Sigmoid colon (tissue), 7 donors: ENCODE measurements at regions of chr1 and their contacts with region 1.

Region 1: GRCh38 chr1:225923692-225924555 is at the start of gene PYCR2:
- DNase-seq: peak; percentile 98
- H3K4me3 ChIP-seq: peak within 1 kb of the TSS; percentile 72 to 96 (median 79)
- H3K27ac ChIP-seq: peak within 1 kb of the TSS; percentile 90 to 96 (median 93)
- H3K4me1 ChIP-seq: peaks cover 0 to 37% (median 34%) of the 10 kb centered on the region in 4 donors
- H3K27me3 ChIP-seq: no peaks in the 10 kb centered on the region
- CTCF ChIP-seq: no peak
- EP300 ChIP-seq: no peak
- POLR2A ChIP-seq: peak; percentile 73
- total RNA-seq, gene PYCR2: 31.0 to 40.5 (median 34.0) TPM

Region 2: GRCh38 chr1:225428068-225428880 is 495.6 kb before region 1 on chr1:
- intact Hi-C with region 1: loop called (anchors 5 kb)
- DNase-seq: peak; percentile 97
- H3K4me3 ChIP-seq: peak overlapping the region; percentile 89 to 100 (median 94)
- H3K27ac ChIP-seq: peak overlapping the region; percentile 95 to 100 (median 98)
- H3K4me1 ChIP-seq: peaks cover 0 to 40% (median 32%) of the 10 kb centered on the region in 4 donors
- H3K27me3 ChIP-seq: no peaks in the 10 kb centered on the region
- CTCF ChIP-seq: no peak
- EP300 ChIP-seq: peak in 1 of 4 donors; percentile 2
- POLR2A ChIP-seq: peak; percentile 83 to 86

Region 3: DNA sequence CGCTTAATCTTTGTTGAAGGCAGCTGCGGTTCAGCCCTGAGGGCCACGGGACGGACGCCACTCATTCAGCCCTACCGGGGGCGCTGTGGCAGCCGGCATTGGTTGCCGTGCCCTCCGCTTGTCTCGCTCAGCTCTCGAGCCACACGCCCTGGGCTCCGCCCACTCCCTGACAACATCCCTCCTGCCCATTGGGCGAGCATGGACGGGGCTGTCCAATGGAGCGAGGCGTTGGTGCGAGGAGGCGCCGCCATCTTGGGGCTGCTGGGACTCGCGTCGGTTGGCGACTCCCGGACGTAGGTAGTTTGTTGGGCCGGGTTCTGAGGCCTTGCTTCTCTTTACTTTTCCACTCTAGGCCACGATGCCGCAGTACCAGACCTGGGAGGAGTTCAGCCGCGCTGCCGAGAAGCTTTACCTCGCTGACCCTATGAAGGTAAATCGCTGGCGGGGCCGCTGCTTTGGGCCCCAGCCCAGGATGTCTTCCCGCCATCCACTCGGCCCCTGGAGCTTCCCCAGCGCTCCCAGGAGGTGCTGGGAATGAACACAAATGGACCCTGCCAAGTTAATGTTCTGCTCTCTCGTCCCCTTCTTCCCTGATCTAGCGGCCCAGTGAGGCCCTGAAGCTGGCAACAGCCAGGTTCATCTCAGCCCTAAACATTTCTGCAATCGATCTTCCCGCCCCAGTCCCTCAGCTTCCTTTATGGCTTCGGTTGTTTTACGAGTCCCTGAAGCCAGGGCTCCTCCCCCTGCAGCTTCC is 146.2 kb before region 1 on chr1 and contains the start of gene SRP9:
- intact Hi-C with region 1: loop called (anchors 5 kb)
- DNase-seq: peak; percentile 99
- H3K4me3 ChIP-seq: peak within 1 kb of the TSS; percentile 63 to 84 (median 74)
- H3K27ac ChIP-seq: peak within 1 kb of the TSS; percentile 92 to 96 (median 94)
- H3K4me1 ChIP-seq: peaks cover 0 to 82% (median 79%) of the 10 kb centered on the region in 4 donors
- H3K27me3 ChIP-seq: no peaks in the 10 kb centered on the region
- CTCF ChIP-seq: peak; percentile 77 to 93 (median 83)
- EP300 ChIP-seq: no peak
- POLR2A ChIP-seq: peak; percentile 88 to 93
- total RNA-seq, gene SRP9: 148 to 270 (median 220) TPM

Region 4: GRCh38 chr1:225871359-225872074 is 52.4 kb before region 1 on chr1:
- intact Hi-C with region 1: no loop called
- DNase-seq: no peak
- H3K4me3 ChIP-seq: no peak overlapping the region
- H3K27ac ChIP-seq: no peak overlapping the region
- H3K4me1 ChIP-seq: no peaks in the 10 kb centered on the region
- H3K27me3 ChIP-seq: no peaks in the 10 kb centered on the region
- CTCF ChIP-seq: no peak
- EP300 ChIP-seq: no peak
- POLR2A ChIP-seq: no peak

Region 5: DNA sequence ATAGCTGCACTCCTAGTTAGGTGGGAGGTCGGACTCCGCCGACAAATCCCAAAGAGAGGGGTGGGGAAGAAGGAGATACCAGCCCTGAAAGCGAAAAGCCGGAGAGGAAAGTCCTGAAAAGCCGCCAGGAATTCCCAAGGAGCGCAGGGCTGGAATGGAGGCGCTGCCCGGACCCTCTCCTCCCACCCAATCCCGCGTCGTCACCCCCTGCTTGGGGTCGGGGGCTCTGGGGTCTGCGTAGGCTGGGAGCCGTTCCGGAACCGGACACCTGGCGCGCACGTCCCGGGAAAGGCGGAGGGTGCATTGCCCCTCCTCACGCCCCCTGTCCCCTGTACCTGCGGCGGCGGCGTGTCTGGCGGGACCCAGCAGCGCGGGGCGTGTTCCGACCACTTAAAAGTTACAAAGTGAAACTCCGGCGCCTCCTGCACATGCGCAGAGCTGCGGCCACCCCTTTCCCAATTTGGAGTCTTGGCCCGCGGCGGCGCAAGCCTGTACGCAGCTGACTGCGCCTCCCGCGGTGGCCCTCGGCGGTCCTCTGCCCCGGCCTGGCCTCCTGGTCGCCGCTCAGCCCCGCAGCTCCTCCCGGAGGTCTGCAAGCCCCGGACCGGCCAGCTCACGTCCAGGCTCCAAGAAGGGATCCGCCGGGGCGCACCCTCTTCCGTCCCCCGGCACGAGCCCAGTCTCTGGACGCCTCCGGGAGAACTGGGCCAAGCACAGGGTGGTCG is 41.8 kb before region 1 on chr1 and contains the start of gene TMEM63A:
- intact Hi-C with region 1: loop called (anchors 2 kb)
- DNase-seq: peak; percentile 98
- H3K4me3 ChIP-seq: peak within 1 kb of the TSS; percentile 91 to 98 (median 94)
- H3K27ac ChIP-seq: peak within 1 kb of the TSS; percentile 88 to 91 (median 90)
- H3K4me1 ChIP-seq: peaks cover 0 to 54% (median 49%) of the 10 kb centered on the region in 4 donors
- H3K27me3 ChIP-seq: no peaks in the 10 kb centered on the region
- CTCF ChIP-seq: peak in 1 of 4 experiments; percentile 49
- EP300 ChIP-seq: no peak
- POLR2A ChIP-seq: peak; percentile 66 to 84
- total RNA-seq, gene TMEM63A: 25.3 to 94.4 (median 36.9) TPM

Region 6: DNA sequence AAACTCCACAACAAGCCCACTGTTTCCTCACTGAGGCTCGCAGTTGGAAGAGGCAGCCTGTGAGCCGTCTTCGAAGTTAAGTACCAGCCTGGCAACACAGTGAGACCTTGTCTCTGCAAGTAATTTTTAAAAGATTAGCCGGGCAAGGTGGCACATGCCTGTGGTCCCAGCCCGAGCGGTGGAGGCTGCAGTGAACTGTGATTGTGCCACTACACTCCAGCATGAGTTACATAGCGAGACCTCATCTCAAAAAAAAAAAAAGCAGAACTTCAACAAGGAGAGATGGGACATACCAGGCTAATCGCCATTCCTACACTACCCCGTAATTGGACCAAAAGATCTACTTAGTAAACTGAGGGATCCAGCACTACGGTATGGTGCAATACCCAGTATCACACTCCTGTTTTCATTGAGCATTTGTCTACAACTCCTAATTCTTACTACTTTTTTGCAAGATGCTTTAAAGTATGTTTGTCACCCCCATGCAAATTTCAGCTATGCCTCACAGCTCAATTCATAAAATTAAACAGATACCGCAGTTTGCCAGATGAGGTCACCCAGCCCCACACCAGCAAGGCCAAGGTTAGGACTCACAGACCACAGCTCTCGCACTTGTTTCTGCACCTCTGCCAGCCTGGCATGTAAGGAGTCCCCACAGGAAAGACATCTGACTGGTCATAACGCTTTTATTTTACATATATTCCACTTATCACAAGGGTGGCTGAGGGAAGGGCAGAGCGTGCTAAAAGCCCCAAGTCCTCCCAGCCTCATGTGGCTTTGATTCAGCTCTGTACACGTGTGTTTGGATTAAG is 54.2 kb after region 1 on chr1:
- intact Hi-C with region 1: loop called (anchors 5 kb)
- DNase-seq: peak; percentile 37
- H3K4me3 ChIP-seq: no peak overlapping the region
- H3K27ac ChIP-seq: no peak overlapping the region
- H3K4me1 ChIP-seq: peaks cover 0 to 7% (median 4%) of the 10 kb centered on the region in 4 donors
- H3K27me3 ChIP-seq: no peaks in the 10 kb centered on the region
- CTCF ChIP-seq: no peak
- EP300 ChIP-seq: no peak
- POLR2A ChIP-seq: no peak

Region 7: DNA sequence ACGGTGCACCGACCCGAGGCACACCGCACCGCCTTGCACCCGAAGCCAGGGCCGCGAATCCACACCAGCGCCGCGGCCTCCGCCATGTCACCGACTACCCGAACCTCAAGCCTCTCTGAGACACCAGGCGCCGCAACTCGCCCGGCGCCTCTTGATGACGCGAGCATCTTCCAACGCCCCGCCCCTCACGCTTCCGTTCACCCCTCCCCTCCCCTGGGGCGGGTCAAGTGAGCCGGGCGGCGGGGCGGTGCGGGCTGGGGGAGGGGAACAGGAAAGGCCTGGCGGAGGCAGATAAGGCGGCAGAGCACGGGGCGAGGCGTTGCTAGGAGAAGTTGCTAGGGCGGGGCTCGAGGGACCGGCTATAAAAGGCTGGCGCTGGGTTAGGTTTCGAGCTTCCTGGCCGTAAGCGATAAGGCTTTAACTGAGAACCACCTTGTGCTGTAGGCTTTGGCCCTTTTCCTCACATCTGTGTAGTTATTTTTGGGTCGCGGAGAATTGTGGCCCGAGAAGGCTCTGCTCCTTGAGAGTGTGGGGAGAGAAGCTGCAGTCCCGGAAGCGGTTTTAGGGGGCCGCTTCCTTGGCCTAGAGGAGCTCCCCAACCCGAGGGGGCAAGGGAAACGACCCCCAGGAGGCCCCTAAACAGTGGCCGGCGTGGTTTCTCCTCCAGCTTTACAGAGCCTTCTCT is 75.4 kb after region 1 on chr1 and contains the start of gene SDE2:
- intact Hi-C with region 1: loop called (anchors 2 kb)
- DNase-seq: peak; percentile 100
- H3K4me3 ChIP-seq: peak within 1 kb of the TSS; percentile 56 to 90 (median 81)
- H3K27ac ChIP-seq: peak within 1 kb of the TSS; percentile 95 to 98 (median 97)
- H3K4me1 ChIP-seq: peaks cover 0 to 36% (median 26%) of the 10 kb centered on the region in 4 donors
- H3K27me3 ChIP-seq: no peaks in the 10 kb centered on the region
- CTCF ChIP-seq: peak in 1 of 4 experiments; percentile 20
- EP300 ChIP-seq: peak in 2 of 4 donors; percentile 68 to 84
- POLR2A ChIP-seq: peak; percentile 81 to 87
- total RNA-seq, gene SDE2: 11.1 to 21.9 (median 18.4) TPM